ENCODE measurements at regions of chr7 and their contacts with region 1.

Region 1: GRCh38 chr7:44973610-44974401 is 5.0 kb downstream of the MYO1G start:
- DNase-seq: peak in 9 of 10 donors; percentile 43 to 80 (median 48)
- ATAC-seq: peak; percentile 26 to 28
- H3K4me3 Mint-ChIP-seq: peak overlapping the region in 1 of 10 donors; percentile 29
- H3K27ac Mint-ChIP-seq: peak overlapping the region in 9 of 10 donors; percentile 47 to 88 (median 77)
- H3K4me1 Mint-ChIP-seq: peaks cover 17 to 61% (median 49%) of the 10 kb centered on the region in 4 donors
- H3K27me3 Mint-ChIP-seq: no peaks in the 10 kb centered on the region

Region 2: DNA sequence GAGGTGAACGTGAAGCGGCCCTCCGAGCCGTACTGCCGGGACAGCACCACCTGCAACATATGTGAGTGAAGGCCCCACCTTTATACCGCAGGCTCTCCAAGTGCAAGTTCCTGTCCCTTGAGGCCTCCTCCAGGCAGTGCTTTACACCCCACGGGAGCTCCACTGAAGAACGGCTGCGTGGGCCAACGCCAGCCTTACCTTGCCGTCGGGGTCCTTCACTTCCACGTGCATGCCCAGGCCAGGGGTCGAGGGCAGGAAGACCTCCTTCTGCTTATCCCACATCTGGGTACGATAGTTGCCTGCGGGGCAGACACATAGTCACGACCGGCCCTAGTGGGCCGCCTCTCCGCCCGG is 392.3 kb before region 1 on chr7:
- POLR2A ChIA-PET with region 1: no interaction called
- DNase-seq: peak; percentile 15 to 76 (median 48)
- ATAC-seq: peak; percentile 34 to 42
- H3K4me3 Mint-ChIP-seq: peak overlapping the region; percentile 87 to 93 (median 91)
- H3K27ac Mint-ChIP-seq: peak overlapping the region; percentile 89 to 99 (median 98)
- H3K4me1 Mint-ChIP-seq: peaks cover 14 to 37% (median 35%) of the 10 kb centered on the region in 4 donors
- H3K27me3 Mint-ChIP-seq: peaks cover 0 to 3% (median 0%) of the 10 kb centered on the region in 5 donors

Region 3: GRCh38 chr7:44986218-44987053 is 12.6 kb after region 1 on chr7:
- POLR2A ChIA-PET with region 1: interaction called, 22 read pairs
- DNase-seq: peak; percentile 90 to 97 (median 94)
- ATAC-seq: peak; percentile 93 to 95
- H3K4me3 Mint-ChIP-seq: peak overlapping the region; percentile 93 to 99 (median 98)
- H3K27ac Mint-ChIP-seq: peak overlapping the region; percentile 95 to 100 (median 99)
- H3K4me1 Mint-ChIP-seq: peaks cover 27 to 61% (median 54%) of the 10 kb centered on the region in 4 donors
- H3K27me3 Mint-ChIP-seq: no peaks in the 10 kb centered on the region

Measured in naive thymus-derived CD8-positive, alpha-beta T cell (primary cell).